ENCODE measurements at regions of chr19 and their contacts with region 1.

Region 1: DNA sequence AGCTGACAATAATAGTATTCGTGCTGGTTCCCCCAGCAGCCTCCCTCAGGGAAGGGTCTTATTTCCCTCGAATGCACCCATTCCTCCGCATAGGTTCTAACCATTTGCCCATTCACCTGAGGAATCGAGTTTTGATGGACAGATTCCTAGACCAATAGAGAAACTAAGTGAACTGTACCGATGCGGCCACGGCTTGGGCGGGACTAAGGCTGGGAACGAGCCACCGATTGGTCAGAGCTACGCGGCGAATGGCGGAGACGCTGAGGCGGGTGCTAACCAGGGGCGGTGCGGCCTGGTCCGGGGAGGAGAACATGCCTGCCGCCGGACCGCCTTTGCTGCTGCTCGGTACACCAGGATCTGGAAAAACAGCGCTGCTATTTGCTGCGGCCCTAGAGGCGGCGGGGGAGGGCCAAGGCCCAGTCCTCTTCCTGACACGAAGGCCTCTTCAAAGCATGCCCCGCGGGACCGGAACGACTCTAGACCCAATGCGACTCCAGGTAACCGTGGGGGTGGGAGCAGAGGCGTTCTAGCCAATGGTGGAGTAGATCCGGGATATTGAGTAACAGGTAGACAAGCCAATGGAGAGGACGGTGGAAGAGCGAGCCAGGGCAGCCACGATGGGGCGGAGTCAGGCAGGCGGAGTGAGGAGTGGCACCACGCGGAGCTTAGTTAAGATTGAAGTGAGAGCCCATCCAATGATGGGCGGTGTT is at the start of gene SWSAP1:
- DNase-seq: peak; percentile 99
- ATAC-seq: peak; percentile 95
- H3K4me3 ChIP-seq: peak within 1 kb of the TSS; percentile 77
- H3K27ac ChIP-seq: peak within 1 kb of the TSS; percentile 94
- H3K4me1 ChIP-seq: peaks cover 21% of the 10 kb centered on the region
- H3K27me3 ChIP-seq: no peaks in the 10 kb centered on the region
- CTCF ChIP-seq: no peak
- EP300 ChIP-seq: no peak
- POLR2A ChIP-seq: peak; percentile 95
- RAD21 ChIP-seq: no peak
- polyA plus RNA-seq, gene SWSAP1: 0.18 to 1.0 TPM

Region 2: DNA sequence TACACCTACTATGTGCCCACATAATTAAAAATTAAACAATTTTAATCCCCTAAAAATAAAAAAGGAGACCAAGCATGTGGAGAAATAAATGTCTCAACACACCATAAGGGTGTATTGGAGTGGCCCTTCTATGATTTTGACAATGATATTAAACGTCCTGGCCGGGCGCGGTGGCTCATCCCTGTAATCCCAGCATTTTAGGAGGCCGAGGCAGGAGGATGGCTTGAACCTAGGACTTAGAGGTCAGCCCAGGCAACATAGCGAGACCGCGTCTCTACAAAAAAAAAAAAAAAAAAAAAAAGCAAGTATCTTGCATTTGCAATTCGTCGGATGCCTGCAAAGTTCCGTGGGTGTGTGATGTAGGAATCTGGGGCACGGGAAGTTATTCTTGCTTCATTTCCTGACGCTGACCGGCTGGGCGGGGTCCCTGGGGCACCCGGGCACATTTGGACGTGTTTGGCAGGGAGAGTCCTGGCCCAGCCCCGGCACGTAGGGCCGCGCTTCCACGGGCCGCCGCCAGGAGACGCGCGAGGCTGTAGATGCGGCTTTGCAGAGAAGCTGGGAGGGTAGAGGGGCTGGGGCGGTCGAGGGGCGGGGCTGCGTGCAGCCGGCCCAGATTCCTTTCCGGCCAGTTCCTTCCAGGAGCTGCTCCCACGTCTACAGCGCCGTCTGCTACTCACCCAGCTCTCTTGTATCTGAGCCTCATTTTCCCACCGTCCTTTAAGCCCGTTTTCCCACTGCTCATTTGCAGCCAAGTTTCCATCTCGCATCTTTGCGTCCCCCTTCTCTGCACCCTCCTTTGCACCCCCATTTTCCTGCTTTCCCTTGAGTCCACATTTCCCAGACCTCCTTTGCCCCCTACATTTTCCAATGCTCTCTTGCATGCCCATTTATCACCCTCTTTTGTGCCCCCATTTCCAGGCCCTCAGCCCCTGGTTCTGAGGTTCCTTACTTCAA is 80.9 kb before region 1 on chr19:
- CTCF ChIA-PET with region 1: interaction called, 51 read pairs
- POLR2A ChIA-PET with region 1: interaction called, 8 read pairs
- RAD21 ChIA-PET with region 1: interaction called, 27 read pairs
- SMC1A ChIA-PET with region 1: interaction called, 40 read pairs
- in situ Hi-C with region 1: no loop called
- intact Hi-C with region 1: no loop called
- DNase-seq: peak; percentile 59
- ATAC-seq: peak; percentile 99
- H3K4me3 ChIP-seq: peak overlapping the region; percentile 32; the same call in 1 of the 2 replicates
- H3K27ac ChIP-seq: no peak overlapping the region
- H3K4me1 ChIP-seq: peaks cover 7% of the 10 kb centered on the region
- H3K27me3 ChIP-seq: no peaks in the 10 kb centered on the region
- CTCF ChIP-seq: peak; percentile 91 to 100 (median 96)
- EP300 ChIP-seq: no peak
- POLR2A ChIP-seq: no peak
- RAD21 ChIP-seq: peak; percentile 96

Region 3: GRCh38 chr19:11339254-11340098 is 35.1 kb before region 1 on chr19 and contains the start of gene RAB3D:
- CTCF ChIA-PET with region 1: interaction called, 11 read pairs
- POLR2A ChIA-PET with region 1: interaction called, 48 read pairs
- RAD21 ChIA-PET with region 1: interaction called, 7 read pairs
- SMC1A ChIA-PET with region 1: interaction called, 4 read pairs
- in situ Hi-C with region 1: no loop called
- intact Hi-C with region 1: no loop called
- DNase-seq: peak; percentile 50
- ATAC-seq: peak; percentile 99
- H3K4me3 ChIP-seq: peak within 1 kb of the TSS; percentile 93
- H3K27ac ChIP-seq: peak within 1 kb of the TSS; percentile 45
- H3K4me1 ChIP-seq: peaks cover 6% of the 10 kb centered on the region
- H3K27me3 ChIP-seq: no peaks in the 10 kb centered on the region
- CTCF ChIP-seq: no peak
- EP300 ChIP-seq: no peak
- POLR2A ChIP-seq: peak; percentile 80
- RAD21 ChIP-seq: no peak
- polyA plus RNA-seq, gene RAB3D: 1.1 to 4.1 TPM

Region 4: DNA sequence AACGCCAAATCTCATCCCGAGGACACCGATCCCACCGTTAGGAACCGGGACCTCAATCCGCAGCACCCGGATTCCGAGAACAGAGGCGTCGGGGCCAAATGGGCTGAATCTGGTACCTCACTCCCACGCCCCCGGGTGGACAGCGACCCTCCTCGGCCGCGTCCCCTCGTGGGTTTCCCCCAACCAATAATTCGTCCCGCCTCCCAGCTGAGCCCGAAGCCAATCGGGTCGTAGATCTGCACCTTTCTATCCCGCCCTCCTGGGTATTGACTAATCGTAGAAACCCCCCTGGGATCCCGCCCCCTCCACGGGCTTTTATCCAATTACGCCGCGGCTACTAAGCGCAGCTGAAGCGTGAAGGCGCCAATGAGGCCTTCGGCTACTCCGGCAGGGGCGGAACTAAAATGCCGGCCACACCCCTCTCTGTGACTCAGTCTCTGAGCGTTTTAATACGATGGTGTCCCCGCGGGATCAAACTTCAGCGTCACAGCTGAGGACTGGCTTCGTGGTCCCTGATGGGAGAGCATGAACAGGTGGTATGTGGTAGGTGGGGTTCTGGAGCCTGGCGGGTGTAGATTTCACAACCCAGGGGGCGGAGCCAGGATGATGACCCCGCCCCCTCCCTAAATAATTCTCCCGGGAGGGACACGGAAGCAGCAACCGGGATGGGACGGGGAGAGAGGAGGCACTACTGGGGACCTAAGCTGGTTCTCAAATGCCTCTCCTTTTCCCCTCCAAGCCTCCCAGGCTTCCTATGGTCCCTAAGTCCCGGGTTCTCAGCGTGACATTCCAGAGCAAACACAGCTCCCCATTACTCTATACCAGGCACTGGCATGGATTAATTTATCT is 28.3 kb before region 1 on chr19 and contains the starts of genes CCDC159 and TMEM205:
- CTCF ChIA-PET with region 1: interaction called, 8 read pairs
- POLR2A ChIA-PET with region 1: interaction called, 48 read pairs
- RAD21 ChIA-PET with region 1: interaction called, 20 read pairs
- SMC1A ChIA-PET with region 1: interaction called, 28 read pairs
- in situ Hi-C with region 1: no loop called
- intact Hi-C with region 1: loop called (anchors 2 kb)
- DNase-seq: peak; percentile 97
- ATAC-seq: peak; percentile 96
- H3K4me3 ChIP-seq: peak within 1 kb of the TSS; percentile 95
- H3K27ac ChIP-seq: peak within 1 kb of the TSS; percentile 85
- H3K4me1 ChIP-seq: peaks cover 11% of the 10 kb centered on the region
- H3K27me3 ChIP-seq: no peaks in the 10 kb centered on the region
- CTCF ChIP-seq: peak in 2 of 3 experiments; percentile 20 to 21; a peak in 2 of 6 replicates
- EP300 ChIP-seq: no peak
- POLR2A ChIP-seq: peak; percentile 69
- RAD21 ChIP-seq: no peak
- polyA plus RNA-seq, gene CCDC159: 0.61 to 3.9 TPM
- polyA plus RNA-seq, gene TMEM205: 27.8 to 39.4 TPM